Activated CD4-positive, alpha-beta T cell treated with anti-CD3 and anti-CD28 coated beads, Interleukin-2, amount 10 ng/mL, durations not matched to agents 24 days and 14 days (primary cell): ENCODE measurements at regions of chr10 and their contacts with region 1.

Region 1: DNA sequence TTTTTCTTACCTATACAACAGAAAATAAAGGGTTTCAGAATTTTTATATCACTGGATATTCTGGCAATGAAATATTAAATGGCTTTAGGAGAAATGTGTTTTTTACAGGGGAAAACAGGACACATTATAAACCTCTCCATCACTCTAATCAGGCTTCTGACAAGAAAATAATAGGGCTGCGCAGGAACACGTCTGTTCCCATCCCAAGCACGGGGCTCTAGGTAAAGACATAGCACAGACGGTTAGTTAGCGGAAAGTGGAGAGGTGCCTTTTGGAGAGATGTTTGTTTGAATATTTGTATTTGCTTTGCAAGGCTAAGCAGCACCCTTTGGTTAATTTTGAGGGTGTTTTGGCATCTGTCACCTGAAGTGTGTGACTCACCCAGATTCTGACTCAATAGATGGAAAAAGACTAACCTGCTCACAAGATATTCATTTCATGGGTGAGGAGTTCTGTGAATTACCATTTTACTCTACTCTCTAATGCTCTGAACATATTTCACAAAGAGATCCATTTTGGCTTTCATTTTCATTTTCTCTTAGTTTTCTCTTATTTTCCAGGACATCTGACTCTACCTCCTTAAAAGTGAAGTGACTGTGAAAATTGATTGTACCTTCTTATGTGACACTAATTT is 174.5 kb upstream of the AKR1E2 start:
- DNase-seq: peak; percentile 74
- H3K4me3 Mint-ChIP-seq: peak overlapping the region; percentile 75
- H3K27ac Mint-ChIP-seq: peak overlapping the region; percentile 92
- H3K4me1 Mint-ChIP-seq: peaks cover 32% of the 10 kb centered on the region
- H3K27me3 Mint-ChIP-seq: no peaks in the 10 kb centered on the region

Region 2: DNA sequence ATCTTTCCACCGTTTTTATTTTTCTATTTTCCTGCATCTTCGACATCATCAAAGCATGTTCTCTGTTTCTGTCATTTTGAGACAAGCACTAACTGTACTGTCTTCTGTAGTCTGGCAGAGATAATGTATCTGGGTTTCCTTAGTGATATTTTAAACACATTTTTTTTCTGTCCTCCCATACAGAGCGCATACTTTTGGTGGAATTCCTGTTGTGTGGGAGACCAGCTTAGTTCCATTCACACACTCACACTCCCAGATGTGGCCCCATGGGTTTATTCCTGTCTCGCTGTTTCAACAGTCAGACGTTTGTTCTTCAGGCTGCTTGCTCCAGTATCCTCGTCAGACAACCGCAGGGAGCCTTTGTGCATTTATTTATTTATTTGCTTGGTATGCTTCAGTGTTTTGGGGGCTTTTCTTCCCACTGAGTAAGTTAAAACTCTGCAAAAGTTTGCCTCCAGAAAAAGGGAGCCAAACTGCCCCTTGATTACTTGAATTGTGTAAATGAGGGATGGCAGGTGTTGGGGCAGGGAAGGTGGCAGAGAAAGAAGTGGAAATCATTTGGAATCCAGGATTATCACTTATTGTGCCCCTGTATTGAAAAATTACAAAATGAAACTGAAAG is 409.7 kb before region 1 on chr10:
- intact Hi-C with region 1: loop called (anchors 2 kb)
- DNase-seq: no peak
- H3K4me3 Mint-ChIP-seq: no peak overlapping the region
- H3K27ac Mint-ChIP-seq: no peak overlapping the region
- H3K4me1 Mint-ChIP-seq: peaks cover 38% of the 10 kb centered on the region
- H3K27me3 Mint-ChIP-seq: no peaks in the 10 kb centered on the region

Region 3: DNA sequence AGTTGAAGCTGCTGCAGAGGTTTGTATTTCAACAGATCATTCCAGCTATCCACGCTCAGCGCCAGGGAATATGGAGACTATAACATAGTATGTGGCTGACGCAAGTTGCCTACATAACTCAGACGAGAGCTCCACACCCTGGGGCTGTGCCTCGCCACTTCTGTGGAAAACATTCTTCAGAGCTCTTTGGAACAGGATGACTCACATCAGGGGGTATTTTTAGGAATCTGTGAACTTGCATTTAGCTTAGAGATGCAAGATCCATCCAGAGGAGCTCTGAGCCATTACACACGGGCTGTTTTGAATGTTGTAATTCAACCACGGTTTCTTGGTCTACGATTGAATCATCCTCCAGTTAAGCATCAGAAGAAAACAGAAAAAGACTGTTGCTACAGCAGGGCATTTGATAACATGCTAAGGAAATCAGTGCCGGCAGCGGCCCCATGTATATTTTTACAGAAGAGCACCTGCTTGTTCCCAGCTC is 307.0 kb before region 1 on chr10:
- intact Hi-C with region 1: loop called (anchors 1 kb)
- DNase-seq: no peak
- H3K4me3 Mint-ChIP-seq: no peak overlapping the region
- H3K27ac Mint-ChIP-seq: peak overlapping the region; percentile 40
- H3K4me1 Mint-ChIP-seq: peaks cover 19% of the 10 kb centered on the region
- H3K27me3 Mint-ChIP-seq: peaks cover 3% of the 10 kb centered on the region

Region 4: GRCh38 chr10:4431114-4431863 is 220.2 kb before region 1 on chr10:
- intact Hi-C with region 1: no loop called
- DNase-seq: no peak
- H3K4me3 Mint-ChIP-seq: no peak overlapping the region
- H3K27ac Mint-ChIP-seq: no peak overlapping the region
- H3K4me1 Mint-ChIP-seq: no peaks in the 10 kb centered on the region
- H3K27me3 Mint-ChIP-seq: peaks cover 14% of the 10 kb centered on the region

Region 5: GRCh38 chr10:4561296-4561695 is 90.2 kb before region 1 on chr10:
- intact Hi-C with region 1: no loop called
- DNase-seq: no peak
- H3K4me3 Mint-ChIP-seq: no peak overlapping the region
- H3K27ac Mint-ChIP-seq: no peak overlapping the region
- H3K4me1 Mint-ChIP-seq: no peaks in the 10 kb centered on the region
- H3K27me3 Mint-ChIP-seq: peaks cover 31% of the 10 kb centered on the region

Region 6: DNA sequence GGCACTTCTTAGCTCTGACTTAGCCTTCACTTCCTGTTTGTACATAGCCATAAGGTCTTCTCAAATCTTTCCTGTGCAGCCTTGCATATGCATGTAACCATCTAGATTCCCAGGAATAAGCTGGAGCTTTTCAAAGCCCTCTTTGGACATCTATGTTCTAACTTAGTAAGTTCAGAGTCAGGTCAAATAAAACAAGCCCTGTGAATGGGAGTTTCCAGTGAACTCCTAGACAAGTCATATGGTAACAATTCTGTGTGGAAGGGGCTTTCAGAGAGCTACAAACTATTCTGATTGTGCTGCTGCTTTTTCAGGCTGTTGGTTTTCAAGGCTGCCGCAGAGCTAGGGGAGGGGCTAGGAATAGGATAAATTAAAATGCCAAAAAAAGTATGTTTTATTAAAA is 33.9 kb before region 1 on chr10:
- intact Hi-C with region 1: no loop called
- DNase-seq: no peak
- H3K4me3 Mint-ChIP-seq: no peak overlapping the region
- H3K27ac Mint-ChIP-seq: no peak overlapping the region
- H3K4me1 Mint-ChIP-seq: no peaks in the 10 kb centered on the region
- H3K27me3 Mint-ChIP-seq: peaks cover 27% of the 10 kb centered on the region

Region 7: GRCh38 chr10:4686644-4686996 is 35.1 kb after region 1 on chr10:
- intact Hi-C with region 1: loop called (anchors 2 kb)
- DNase-seq: peak; percentile 32
- H3K4me3 Mint-ChIP-seq: peak overlapping the region; percentile 28
- H3K27ac Mint-ChIP-seq: peak overlapping the region; percentile 87
- H3K4me1 Mint-ChIP-seq: peaks cover 11% of the 10 kb centered on the region
- H3K27me3 Mint-ChIP-seq: peaks cover 1% of the 10 kb centered on the region